ENCODE measurements at regions of chr1 and their contacts with region 1.

Region 1: GRCh38 chr1:231211005-231211857 is 29.8 kb upstream of the GNPAT start:
- DNase-seq: peak; percentile 16
- H3K4me3 ChIP-seq: peak overlapping the region; percentile 33
- CTCF ChIP-seq: peak; percentile 83

Region 2: DNA sequence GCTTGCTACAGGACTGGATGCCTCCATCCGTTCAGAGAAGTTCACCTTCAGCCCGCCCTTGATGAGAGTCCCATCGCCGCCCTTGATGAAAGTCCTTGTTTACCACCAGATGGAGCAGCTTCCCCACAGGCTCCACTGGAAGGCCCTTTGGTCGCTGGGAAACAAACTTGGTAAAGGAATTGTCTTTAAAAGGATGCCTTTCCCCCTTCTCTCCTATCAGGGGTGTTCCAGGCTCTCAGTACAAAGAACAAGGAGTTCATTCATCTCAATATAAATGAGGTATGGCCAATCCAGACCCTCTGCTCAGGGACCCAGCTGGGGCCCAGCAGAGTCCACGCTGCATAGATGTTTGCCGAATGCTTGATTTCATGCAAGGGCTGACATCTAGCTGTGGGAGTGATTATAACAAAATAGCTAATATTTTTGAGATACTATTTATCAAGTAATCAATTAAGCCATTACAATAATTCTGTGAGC is 413.3 kb before region 1 on chr1:
- in situ Hi-C with region 1: loop called (anchors 25 kb)
- DNase-seq: peak; percentile 70
- H3K4me3 ChIP-seq: no peak overlapping the region
- CTCF ChIP-seq: peak; percentile 87

Region 3: GRCh38 chr1:230940848-230941247 is 270.4 kb before region 1 on chr1:
- in situ Hi-C with region 1: loop called (anchors 25 kb)
- DNase-seq: no peak
- H3K4me3 ChIP-seq: no peak overlapping the region
- CTCF ChIP-seq: no peak

Measured in astrocyte of the cerebellum (primary cell).